Left ventricle myocardium superior (tissue), 1 donor: ENCODE measurements at regions of chr1 and their contacts with region 1.

Region 1: GRCh38 chr1:180482425-180483275 is 19.7 kb downstream of the ACBD6 start:
- DNase-seq: no peak
- ATAC-seq: no peak

Region 2: GRCh38 chr1:180112984-180113647 is 369.5 kb before region 1 on chr1:
- intact Hi-C with region 1: no loop called
- DNase-seq: no peak
- ATAC-seq: peak; percentile 66

Region 3: DNA sequence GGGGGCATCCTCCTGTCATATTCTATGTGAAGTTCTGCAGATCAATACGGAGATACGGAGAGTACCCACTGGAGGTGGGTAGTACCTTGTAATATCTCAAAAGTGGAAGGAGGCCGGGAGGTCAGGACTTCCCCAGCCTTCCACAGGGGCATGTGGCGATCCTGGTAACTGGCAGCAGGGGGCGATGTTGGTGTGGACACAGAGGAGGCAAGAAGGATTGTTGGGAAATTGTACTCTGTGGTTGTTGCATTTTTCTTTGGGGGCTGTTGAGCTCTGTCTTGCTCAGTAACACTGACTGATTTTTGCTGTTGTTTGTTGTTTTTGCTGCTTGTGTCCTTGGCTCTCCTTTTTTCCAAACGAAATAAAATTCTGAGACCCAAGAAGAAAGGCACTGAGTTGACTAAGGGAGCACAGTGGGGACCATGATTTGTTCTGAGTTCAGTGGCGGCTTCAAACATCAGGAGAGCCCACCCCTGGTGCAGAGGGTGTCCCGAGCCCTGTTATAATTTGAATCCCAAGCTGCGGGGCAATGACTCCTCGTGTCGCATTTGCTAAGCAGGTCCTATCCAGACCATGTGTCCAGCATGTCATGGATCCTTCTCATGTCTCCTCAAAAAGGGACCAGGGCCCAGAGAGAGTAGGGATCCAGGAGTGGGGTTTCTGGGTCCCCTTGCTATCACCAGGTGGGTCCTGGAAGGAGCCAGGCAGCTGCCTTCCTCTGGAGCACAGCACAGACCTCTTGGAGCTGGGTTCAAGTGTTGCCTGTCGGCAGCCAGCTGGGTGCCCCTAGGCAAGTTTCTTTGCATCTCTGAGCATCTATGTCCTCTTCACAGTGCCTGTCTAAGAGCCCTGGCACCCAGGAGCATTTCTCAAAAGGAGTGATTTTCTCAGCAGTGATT is 229.8 kb before region 1 on chr1:
- intact Hi-C with region 1: loop called (anchors 5 kb)
- DNase-seq: peak; percentile 82
- ATAC-seq: peak; percentile 66

Region 4: GRCh38 chr1:180444522-180444921 is 38.1 kb before region 1 on chr1:
- intact Hi-C with region 1: no loop called
- DNase-seq: no peak
- ATAC-seq: no peak

Region 5: GRCh38 chr1:180762796-180763195 is 280.1 kb after region 1 on chr1:
- intact Hi-C with region 1: no loop called
- DNase-seq: no peak
- ATAC-seq: no peak